PC-3 (cell line): ENCODE measurements at regions of chr7 and their contacts with region 1.

Region 1: GRCh38 chr7:100745184-100745583 is 11.8 kb downstream of the ZAN start:
- DNase-seq: no peak
- ATAC-seq: no peak
- H3K4me3 ChIP-seq: no peak overlapping the region
- H3K27ac ChIP-seq: no peak overlapping the region
- H3K4me1 ChIP-seq: no peaks in the 10 kb centered on the region
- H3K27me3 ChIP-seq: no peaks in the 10 kb centered on the region
- CTCF ChIP-seq: no peak

Region 2: DNA sequence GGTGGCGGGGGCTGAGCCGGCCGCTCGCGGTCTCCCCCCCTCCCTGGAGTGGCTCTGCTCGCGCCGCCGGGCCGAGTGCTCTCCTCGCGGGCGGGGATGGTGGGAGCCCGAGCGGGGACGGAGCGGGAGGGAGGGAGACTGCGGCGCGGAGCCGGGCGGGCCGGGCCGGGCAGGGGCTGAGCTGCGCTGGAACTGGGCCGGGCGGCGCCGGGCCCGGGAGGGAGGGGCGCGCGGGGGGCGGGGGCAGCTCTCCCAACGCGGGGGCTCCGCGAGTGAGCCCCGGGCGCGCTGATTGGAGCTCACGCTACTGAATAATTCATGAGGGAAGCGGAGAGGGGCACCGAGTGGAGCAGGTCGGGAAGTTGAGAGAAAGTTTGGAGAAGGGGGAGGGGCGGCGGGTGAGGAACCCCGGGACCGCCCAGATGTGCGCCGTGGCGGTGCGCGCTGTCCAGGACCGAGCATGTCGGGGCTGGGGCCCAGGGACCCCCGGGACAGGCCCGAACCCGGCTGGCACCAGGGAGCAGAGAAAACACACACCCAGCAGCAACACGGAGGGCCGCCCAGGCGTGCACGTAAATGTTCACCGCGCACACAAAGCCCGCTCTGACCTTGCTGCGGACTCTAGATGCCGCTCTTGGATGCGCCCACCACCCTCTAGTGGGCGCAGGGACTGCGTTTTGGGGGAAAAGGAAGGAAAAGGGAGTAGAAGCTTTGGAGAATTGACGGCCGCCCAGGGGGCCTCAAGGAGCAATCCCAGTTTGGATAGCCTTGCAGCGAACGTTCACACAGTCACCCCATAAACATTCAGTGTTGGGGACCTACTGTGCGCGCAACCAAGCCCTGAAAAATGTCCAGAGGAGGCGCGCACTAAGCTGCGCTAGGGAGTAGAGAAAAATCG is 82.4 kb after region 1 on chr7 and contains the start of gene EPHB4:
- CTCF ChIA-PET with region 1: no interaction called
- POLR2A ChIA-PET with region 1: interaction called, 27 read pairs
- intact Hi-C with region 1: no loop called
- DNase-seq: peak; percentile 84
- ATAC-seq: peak; percentile 79
- H3K4me3 ChIP-seq: peak within 1 kb of the TSS; percentile 99
- H3K27ac ChIP-seq: peak within 1 kb of the TSS; percentile 5; the same call in 1 of the 2 replicates
- H3K4me1 ChIP-seq: peaks cover 5% of the 10 kb centered on the region; the same call in 1 of the 2 replicates
- H3K27me3 ChIP-seq: no peaks in the 10 kb centered on the region
- CTCF ChIP-seq: peak; percentile 62
- total RNA-seq, gene EPHB4: 104 and 150 TPM in 2 replicates